ENCODE measurements at regions of chr19 and their contacts with region 1.

Region 1: DNA sequence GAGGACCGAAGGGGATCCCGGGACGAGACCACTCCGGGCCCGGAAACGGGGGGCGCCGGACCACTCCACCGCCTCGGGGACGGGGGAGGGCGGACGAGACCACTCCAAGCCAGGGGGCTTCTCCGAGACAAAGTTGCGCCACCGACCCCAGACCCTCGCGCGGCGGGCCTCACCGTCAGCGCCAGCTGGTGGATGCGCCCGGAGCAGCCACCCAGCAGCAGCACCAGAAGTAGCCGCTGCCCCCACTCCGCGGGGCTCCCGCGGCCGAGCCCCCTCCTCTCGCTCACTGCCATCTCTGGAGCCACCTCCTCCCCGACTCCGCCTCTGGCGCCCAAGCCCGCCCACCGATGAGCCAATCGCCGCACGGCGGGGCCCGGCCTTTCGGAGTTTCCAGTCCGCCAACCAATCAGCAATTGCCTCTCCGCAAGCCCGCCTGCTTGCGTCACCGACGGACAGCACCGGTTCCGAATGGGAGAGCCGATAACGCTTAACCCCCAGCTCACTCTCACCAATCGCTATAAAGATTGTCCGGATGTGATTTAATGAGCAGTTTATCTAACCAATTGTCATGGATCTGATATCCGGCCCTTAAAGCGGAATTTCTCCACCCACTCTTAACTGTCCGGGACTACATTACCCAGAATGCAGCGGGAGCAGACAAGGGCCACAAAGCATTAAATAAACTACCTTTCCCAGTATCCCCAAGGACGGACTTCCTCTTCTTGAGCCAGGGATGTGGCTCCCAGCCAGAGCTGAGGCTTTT is at the start of gene GPR108:
- DNase-seq: peak; percentile 100
- H3K4me3 ChIP-seq: peak within 1 kb of the TSS; percentile 67 to 92
- H3K27ac ChIP-seq: peak within 1 kb of the TSS; percentile 93 to 97
- H3K4me1 ChIP-seq: peaks cover 16% of the 10 kb centered on the region
- H3K27me3 ChIP-seq: no peaks in the 10 kb centered on the region
- CTCF ChIP-seq: peak in 1 of 4 experiments; percentile 23
- POLR2A ChIP-seq: peak; percentile 80
- total RNA-seq, gene GPR108: 62.7 to 98.0 TPM

Region 2: DNA sequence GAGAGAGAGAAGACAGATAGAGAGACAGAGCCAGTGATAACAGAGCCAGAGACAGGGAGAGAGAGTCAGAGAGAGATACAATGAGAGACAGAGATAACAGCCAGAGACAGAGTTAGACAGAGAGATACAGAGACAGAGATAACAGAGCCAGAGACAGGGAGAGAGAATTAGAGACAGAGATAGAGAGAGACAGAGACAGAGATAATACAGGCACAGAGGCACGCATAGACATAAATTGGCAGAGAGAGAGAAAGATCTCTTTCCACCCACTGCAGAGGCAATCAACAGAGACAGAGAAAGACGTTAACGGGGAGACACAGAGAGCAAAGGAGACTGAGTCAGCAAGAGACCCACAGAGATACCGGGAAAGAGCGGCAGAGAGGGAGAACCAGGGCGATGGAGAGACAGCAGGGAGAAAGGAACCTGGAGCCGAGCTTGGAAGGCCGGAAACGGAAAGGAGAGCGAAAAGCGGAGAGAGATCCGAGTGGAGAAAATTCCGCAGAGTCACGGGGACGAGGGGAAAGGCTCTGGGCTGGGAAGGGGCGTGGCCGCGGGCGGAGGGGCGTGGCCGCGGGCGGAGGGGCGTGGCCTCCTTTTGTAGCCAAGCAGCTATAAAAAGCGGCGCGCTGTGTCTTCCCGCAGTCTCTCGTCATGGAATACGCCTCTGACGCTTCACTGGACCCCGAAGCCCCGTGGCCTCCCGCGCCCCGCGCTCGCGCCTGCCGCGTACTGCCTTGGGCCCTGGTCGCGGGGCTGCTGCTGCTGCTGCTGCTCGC is 206.9 kb before region 1 on chr19 and contains the start of gene TNFSF9:
- intact Hi-C with region 1: loop called (anchors 10 kb)
- DNase-seq: peak; percentile 79
- H3K4me3 ChIP-seq: peak within 1 kb of the TSS; percentile 40 to 44
- H3K27ac ChIP-seq: no peak within 1 kb of the TSS
- H3K4me1 ChIP-seq: peaks cover 9% of the 10 kb centered on the region
- H3K27me3 ChIP-seq: no peaks in the 10 kb centered on the region
- CTCF ChIP-seq: no peak
- POLR2A ChIP-seq: peak; percentile 89
- total RNA-seq, gene TNFSF9: 4.5 TPM in 1 of 2 donors, not detected in the other

Region 3: DNA sequence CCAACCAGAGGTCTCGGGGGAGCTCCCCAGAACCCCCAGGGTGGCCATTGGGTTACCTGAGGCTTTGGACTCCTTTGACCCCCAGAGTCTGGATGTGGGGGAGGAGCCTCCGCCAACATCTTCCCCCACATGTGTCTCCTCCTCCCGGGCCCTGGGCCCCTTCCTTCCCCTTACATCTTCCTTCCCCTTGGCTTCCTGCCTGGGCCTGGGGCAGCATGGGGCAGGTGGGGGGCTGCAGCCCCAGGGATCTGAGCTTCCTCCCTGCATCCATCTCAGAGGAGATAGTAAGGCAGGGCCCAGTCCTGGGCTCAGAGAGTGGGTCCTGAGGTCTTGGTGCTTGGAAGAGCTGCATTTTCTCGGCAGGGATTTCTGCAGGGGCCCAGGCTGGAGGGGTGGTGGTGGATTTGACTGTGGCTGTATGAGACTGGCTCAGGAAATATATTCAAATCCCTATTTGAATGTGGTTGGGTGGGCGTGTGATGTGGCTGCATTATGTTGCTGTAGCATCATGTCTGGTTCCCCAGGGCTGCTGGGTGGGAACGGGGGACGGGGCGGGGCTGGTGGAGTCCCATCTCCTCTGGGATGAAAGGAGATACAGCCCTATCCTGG is 36.0 kb after region 1 on chr19:
- intact Hi-C with region 1: no loop called
- DNase-seq: no peak
- H3K4me3 ChIP-seq: peak overlapping the region; percentile 21 to 22
- H3K27ac ChIP-seq: no peak overlapping the region
- H3K4me1 ChIP-seq: no peaks in the 10 kb centered on the region
- H3K27me3 ChIP-seq: no peaks in the 10 kb centered on the region
- CTCF ChIP-seq: no peak
- POLR2A ChIP-seq: no peak